Gastrocnemius medialis (tissue), 4 donors: ENCODE measurements at regions of chr17 and their contacts with region 1.

Region 1: DNA sequence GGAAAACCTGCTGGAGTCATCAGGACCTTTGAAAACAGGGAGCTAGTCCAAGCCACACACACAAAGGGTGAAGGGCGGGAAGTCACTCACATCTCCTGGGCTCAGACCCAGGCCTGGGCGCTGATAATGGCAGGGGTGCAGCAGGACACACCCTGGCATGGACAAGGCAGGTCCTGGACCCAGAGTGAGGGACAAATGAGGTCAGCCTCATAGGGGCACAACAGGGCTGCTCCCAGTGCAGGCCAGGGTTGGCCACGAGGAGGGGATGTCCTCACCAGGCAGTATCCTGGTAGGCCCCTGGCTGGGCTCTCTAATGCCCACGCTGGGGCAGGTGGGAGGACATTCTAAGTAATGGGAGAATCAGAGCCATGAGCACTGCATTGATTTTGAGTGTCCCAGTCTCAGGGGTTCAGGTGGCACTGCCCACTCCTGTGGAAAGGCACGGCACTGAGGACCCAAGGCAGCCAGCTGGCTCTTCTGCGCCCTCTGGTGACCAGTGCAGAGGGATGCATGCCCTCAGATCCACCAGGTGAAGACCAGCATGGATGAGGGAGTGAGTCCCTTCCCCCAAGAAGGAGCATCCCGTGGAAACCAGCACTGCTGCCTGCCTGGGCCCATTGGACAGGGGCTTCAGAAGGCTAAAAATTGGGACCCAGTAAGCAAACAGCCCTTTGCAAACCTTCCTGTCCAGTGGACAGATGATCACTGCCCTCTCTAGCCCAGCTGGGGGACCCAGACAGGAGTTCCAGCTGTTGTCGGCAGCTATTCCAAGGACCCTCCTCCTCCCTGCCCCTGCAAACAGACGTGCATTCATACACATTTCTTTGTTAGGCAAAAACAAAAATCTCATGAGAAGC is 23.4 kb upstream of the SREBF1 start:
- DNase-seq: peak in 1 of 2 donors; percentile 64
- ATAC-seq: peak; percentile 94 to 95
- H3K4me3 ChIP-seq: no peak overlapping the region
- H3K27ac ChIP-seq: peak overlapping the region in 3 of 4 donors; percentile 28 to 44 (median 38)
- H3K4me1 ChIP-seq: peaks cover 4 to 5% of the 10 kb centered on the region in 2 donors
- H3K27me3 ChIP-seq: no peaks in the 10 kb centered on the region
- CTCF ChIP-seq: peak; percentile 96 to 99 (median 98)
- POLR2A ChIP-seq: no peak

Region 2: GRCh38 chr17:17675925-17676534 is 184.1 kb before region 1 on chr17:
- in situ Hi-C with region 1: loop called (anchors 10 to 25 kb)
- intact Hi-C with region 1: loop called (anchors 1 kb)
- DNase-seq: no peak
- ATAC-seq: no peak
- H3K4me3 ChIP-seq: no peak overlapping the region
- H3K27ac ChIP-seq: no peak overlapping the region
- H3K4me1 ChIP-seq: peaks cover 3 to 7% of the 10 kb centered on the region in 2 donors
- H3K27me3 ChIP-seq: no peaks in the 10 kb centered on the region
- CTCF ChIP-seq: no peak
- POLR2A ChIP-seq: no peak

Region 3: GRCh38 chr17:17800504-17801021 is 59.6 kb before region 1 on chr17:
- in situ Hi-C with region 1: loop called in 3 of 4 experiments (anchors 5 to 10 kb)
- intact Hi-C with region 1: no loop called
- DNase-seq: no peak
- ATAC-seq: peak in 1 of 2 donors; percentile 35
- H3K4me3 ChIP-seq: no peak overlapping the region
- H3K27ac ChIP-seq: no peak overlapping the region
- H3K4me1 ChIP-seq: peaks cover 5 to 6% of the 10 kb centered on the region in 2 donors
- H3K27me3 ChIP-seq: no peaks in the 10 kb centered on the region
- CTCF ChIP-seq: no peak
- POLR2A ChIP-seq: no peak

Region 4: GRCh38 chr17:17812211-17813057 is 47.7 kb before region 1 on chr17:
- in situ Hi-C with region 1: loop called in 3 of 4 experiments (anchors 5 to 10 kb)
- intact Hi-C with region 1: loop called (anchors 1 kb)
- DNase-seq: peak; percentile 49 to 70
- ATAC-seq: peak; percentile 50 to 61
- H3K4me3 ChIP-seq: no peak overlapping the region
- H3K27ac ChIP-seq: peak overlapping the region; percentile 2 to 88 (median 46)
- H3K4me1 ChIP-seq: peaks cover 32% of the 10 kb centered on the region in 2 donors
- H3K27me3 ChIP-seq: no peaks in the 10 kb centered on the region
- CTCF ChIP-seq: peak; percentile 98 to 100 (median 100)
- POLR2A ChIP-seq: no peak

Region 5: DNA sequence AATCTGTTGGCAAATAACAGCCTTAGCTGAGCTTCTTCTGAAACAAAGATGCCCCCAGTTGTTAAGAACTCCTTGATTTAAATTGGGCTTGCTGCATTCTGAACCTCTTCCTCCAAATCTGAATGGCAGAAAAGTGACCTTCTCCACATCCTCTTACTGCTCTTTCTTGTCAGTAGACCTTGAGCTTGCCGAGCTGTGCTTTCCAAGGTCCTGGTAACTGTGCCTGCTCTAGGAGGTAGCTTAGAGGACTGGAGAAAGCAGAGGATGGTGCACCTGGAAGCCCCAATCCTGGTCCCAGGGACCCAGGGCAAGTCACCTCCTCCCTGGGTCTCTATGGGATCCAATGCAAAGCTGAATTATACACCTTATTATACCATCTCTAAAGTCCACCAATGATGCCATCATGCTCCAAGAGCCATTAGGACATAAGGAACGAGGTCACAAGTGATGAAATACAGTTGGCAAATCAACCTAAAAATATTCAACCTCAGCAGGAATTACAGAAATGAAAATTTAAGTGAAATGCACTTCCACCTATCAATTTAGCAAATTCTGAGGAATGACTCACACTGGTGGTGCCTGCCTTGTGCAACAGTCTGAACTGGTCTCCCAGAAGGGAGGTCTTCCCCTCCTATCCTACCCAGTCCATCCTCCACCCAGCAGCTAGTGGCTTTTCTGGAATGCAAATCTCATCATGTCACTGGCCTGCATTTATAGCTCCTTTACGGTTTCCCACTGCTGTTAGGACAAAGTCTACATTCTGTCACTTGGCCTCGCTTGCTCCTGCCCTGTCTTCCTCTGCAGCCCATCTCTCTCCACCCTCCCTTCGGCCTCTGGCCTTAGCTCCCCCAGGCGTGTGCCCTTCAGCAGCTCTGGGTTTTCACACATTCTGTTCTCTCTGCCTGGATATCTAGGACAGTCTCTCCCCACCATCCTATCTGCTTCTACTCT is 75.5 kb after region 1 on chr17:
- in situ Hi-C with region 1: no loop called
- intact Hi-C with region 1: no loop called
- DNase-seq: peak; percentile 22 to 41
- ATAC-seq: peak; percentile 40 to 65
- H3K4me3 ChIP-seq: no peak overlapping the region
- H3K27ac ChIP-seq: no peak overlapping the region
- H3K4me1 ChIP-seq: peaks cover 54 to 56% of the 10 kb centered on the region in 2 donors
- H3K27me3 ChIP-seq: no peaks in the 10 kb centered on the region
- CTCF ChIP-seq: no peak
- POLR2A ChIP-seq: no peak